ENCODE measurements at regions of chr12 and their contacts with region 1.

Region 1: GRCh38 chr12:68932961-68933893 is at the start of gene CPM:
- DNase-seq: peak; percentile 47 to 89 (median 62)
- ATAC-seq: peak; percentile 98
- H3K4me3 ChIP-seq: peak within 1 kb of the TSS; percentile 58
- H3K4me3 Mint-ChIP-seq: peak within 1 kb of the TSS; percentile 83 to 95 (median 89)
- H3K27ac ChIP-seq: peak within 1 kb of the TSS; percentile 0
- H3K27ac Mint-ChIP-seq: peak within 1 kb of the TSS in 3 of 9 donors; percentile 51 to 55 (median 53)
- H3K4me1 ChIP-seq: peaks cover 0 to 6% of the 10 kb centered on the region in 2 donors
- H3K4me1 Mint-ChIP-seq: peaks cover 6 to 20% (median 7%) of the 10 kb centered on the region in 7 donors
- H3K27me3 ChIP-seq: peaks cover 0 to 2% of the 10 kb centered on the region in 2 donors
- H3K27me3 Mint-ChIP-seq: peaks cover 5 to 16% (median 11%) of the 10 kb centered on the region in 5 donors
- total RNA-seq, gene CPM: 1.0 to 5.9 (median 2.7) TPM

Region 2: DNA sequence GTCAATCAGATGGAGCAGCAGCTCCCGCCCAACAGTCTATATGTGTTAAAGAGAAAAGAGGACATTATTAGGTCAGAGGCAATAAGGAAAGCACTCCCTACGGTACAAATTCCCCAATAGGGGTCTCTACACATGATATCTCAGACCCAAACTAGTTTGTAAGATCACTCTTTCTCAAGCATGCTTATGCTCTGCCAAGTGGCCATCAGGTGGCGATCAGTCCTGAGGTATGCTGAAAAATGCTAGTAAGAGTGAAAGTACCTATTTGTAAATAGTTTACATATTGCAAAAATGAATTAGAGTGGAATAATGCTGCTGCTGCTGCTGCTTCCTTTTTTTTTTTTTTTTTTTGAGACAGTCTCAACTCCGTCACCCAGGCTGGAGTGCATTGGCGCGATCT is 61.3 kb before region 1 on chr12:
- CTCF ChIA-PET with region 1: no interaction called
- POLR2A ChIA-PET with region 1: no interaction called
- intact Hi-C with region 1: loop called in 1 of 2 experiments (anchors 10 kb)
- DNase-seq: no peak
- ATAC-seq: peak; percentile 36
- H3K4me3 ChIP-seq: no peak overlapping the region
- H3K4me3 Mint-ChIP-seq: no peak overlapping the region
- H3K27ac ChIP-seq: no peak overlapping the region
- H3K27ac Mint-ChIP-seq: no peak overlapping the region
- H3K4me1 ChIP-seq: no peaks in the 10 kb centered on the region
- H3K4me1 Mint-ChIP-seq: peaks cover 0 to 12% (median 0%) of the 10 kb centered on the region in 7 donors
- H3K27me3 ChIP-seq: no peaks in the 10 kb centered on the region
- H3K27me3 Mint-ChIP-seq: peaks cover 0 to 6% (median 0%) of the 10 kb centered on the region in 5 donors

Region 3: DNA sequence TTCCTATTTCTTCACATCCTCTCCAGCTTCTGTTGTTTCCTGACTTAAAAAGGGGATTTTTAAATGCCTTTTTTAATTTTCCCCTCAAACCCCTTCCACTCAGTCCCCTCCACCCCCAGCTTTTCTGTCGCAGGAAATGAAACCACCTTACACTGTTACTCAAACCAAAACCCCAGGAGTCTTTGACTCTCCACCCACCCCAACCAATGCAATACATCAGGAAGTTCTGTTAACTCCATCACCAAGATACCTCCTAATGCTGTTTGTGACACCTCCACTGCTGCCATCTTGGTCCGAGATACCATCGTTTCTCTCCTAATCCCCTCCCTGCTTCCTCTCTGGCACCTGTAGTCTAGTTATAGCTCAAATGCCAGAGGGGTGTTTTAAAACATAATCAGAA is 25.1 kb after region 1 on chr12:
- CTCF ChIA-PET with region 1: no interaction called
- POLR2A ChIA-PET with region 1: no interaction called
- intact Hi-C with region 1: loop called in 1 of 2 experiments (anchors 2 kb)
- DNase-seq: peak in 1 of 9 donors; percentile 58
- ATAC-seq: no peak
- H3K4me3 ChIP-seq: no peak overlapping the region
- H3K4me3 Mint-ChIP-seq: peak overlapping the region in 1 of 10 donors; percentile 31
- H3K27ac ChIP-seq: no peak overlapping the region
- H3K27ac Mint-ChIP-seq: peak overlapping the region in 1 of 9 donors; percentile 83
- H3K4me1 ChIP-seq: no peaks in the 10 kb centered on the region
- H3K4me1 Mint-ChIP-seq: peaks cover 9 to 28% (median 11%) of the 10 kb centered on the region in 7 donors
- H3K27me3 ChIP-seq: no peaks in the 10 kb centered on the region
- H3K27me3 Mint-ChIP-seq: no peaks in the 10 kb centered on the region

Region 4: GRCh38 chr12:69470189-69471075 is 537.2 kb after region 1 on chr12 and contains the start of gene FRS2:
- CTCF ChIA-PET with region 1: no interaction called
- POLR2A ChIA-PET with region 1: no interaction called
- intact Hi-C with region 1: loop called in 1 of 2 experiments (anchors 2 kb)
- DNase-seq: peak; percentile 66 to 87 (median 81)
- ATAC-seq: peak; percentile 99
- H3K4me3 ChIP-seq: peak within 1 kb of the TSS; percentile 80
- H3K4me3 Mint-ChIP-seq: peak within 1 kb of the TSS; percentile 91 to 100 (median 96)
- H3K27ac ChIP-seq: peak within 1 kb of the TSS; percentile 94
- H3K27ac Mint-ChIP-seq: peak within 1 kb of the TSS; percentile 91 to 99 (median 97)
- H3K4me1 ChIP-seq: peaks cover 11 to 12% of the 10 kb centered on the region in 2 donors
- H3K4me1 Mint-ChIP-seq: peaks cover 41 to 60% (median 51%) of the 10 kb centered on the region in 7 donors
- H3K27me3 ChIP-seq: no peaks in the 10 kb centered on the region
- H3K27me3 Mint-ChIP-seq: no peaks in the 10 kb centered on the region
- total RNA-seq, gene FRS2: 17.5 to 30.1 (median 24.0) TPM

Measured in naive thymus-derived CD4-positive, alpha-beta T cell (primary cell).